Ovary (tissue), 10 donors: ENCODE measurements at regions of chr10 and their contacts with region 1.

Region 1: GRCh38 chr10:47311932-47312662 is 10.2 kb upstream of the GDF2 start:
- DNase-seq: peak; percentile 37 to 76 (median 55)
- H3K4me3 ChIP-seq: no peak overlapping the region
- H3K27ac ChIP-seq: no peak overlapping the region
- H3K4me1 ChIP-seq: no peaks in the 10 kb centered on the region
- H3K27me3 ChIP-seq: no peaks in the 10 kb centered on the region
- CTCF ChIP-seq: peak in 1 of 3 donors; percentile 23
- EP300 ChIP-seq: no peak
- POLR2A ChIP-seq: no peak

Region 2: DNA sequence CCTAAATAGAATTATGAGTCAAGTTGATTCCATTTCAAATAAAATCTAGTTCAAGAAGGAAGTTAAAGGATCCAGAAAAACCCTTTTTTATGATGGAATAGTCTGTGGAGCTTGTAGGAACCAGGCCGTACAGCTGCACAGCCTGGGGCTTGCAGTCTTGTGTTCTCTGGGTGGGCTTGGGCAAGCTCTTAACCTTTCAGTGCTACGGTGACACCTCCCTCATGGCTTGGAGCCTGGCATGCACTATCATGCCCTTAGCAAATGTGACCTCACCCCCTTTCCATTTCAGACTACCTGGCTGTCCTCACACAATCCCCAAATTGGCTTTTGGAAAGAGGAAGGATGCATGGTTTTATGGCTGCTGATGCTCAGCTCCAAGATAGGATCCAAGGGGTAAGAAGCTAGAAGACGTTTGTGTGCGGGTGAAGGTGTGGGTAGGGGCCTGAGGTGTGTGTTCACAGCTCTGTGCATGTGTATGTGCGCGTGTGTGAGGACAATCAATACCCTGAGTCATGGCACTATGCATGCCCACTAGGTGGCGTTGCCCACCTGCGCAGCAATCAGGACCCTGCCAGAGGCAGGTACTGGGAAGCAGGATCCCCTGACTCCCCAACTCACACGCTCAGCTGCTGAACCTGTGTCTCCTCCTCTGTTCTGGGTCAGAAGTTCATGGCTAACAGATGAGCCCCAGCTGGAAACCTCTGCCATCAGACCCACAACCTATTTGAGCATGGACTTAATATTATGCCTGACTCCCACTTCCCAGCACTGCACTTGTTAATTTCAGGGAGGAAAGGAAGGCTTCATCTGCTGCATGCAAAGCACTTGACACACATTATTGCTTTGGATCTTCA is 287.5 kb before region 1 on chr10:
- intact Hi-C with region 1: loop called in 2 of 4 experiments (anchors 5 to 10 kb)
- DNase-seq: peak; percentile 28 to 75 (median 42)
- H3K4me3 ChIP-seq: no peak overlapping the region
- H3K27ac ChIP-seq: no peak overlapping the region
- H3K4me1 ChIP-seq: no peaks in the 10 kb centered on the region
- H3K27me3 ChIP-seq: no peaks in the 10 kb centered on the region
- CTCF ChIP-seq: peak in 1 of 3 donors; percentile 39
- EP300 ChIP-seq: no peak
- POLR2A ChIP-seq: no peak

Region 3: DNA sequence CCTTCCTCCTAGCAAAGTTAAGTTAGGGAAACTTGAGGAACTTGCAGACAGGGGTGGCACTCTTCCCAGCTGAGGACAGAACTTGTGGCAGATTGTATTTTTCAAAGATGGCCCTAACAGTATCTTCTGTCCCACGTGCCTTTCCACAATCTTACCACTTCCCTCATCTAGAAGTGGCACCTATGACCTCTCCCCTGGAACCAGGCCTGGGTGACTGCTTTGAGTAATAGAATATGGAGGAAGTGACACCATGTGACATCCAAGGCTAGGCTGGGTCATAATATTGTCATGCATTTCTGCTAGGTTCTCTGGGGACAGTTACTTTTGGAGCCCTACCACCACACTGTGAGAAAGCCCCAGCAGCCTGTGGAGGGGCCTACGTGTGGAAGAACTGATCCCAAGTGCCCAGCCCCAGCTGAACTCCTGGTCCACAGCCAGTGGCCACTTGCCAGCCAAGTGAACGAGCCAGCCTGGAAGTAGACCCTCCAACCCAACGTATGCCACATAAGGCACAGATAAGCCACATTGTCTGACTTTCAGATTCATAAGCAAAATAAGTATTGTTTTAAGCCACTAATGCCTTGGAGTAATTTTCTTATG is 207.2 kb before region 1 on chr10:
- intact Hi-C with region 1: no loop called
- DNase-seq: no peak
- H3K4me3 ChIP-seq: no peak overlapping the region
- H3K27ac ChIP-seq: no peak overlapping the region
- H3K4me1 ChIP-seq: no peaks in the 10 kb centered on the region
- H3K27me3 ChIP-seq: no peaks in the 10 kb centered on the region
- CTCF ChIP-seq: no peak
- EP300 ChIP-seq: no peak
- POLR2A ChIP-seq: no peak

Region 4: DNA sequence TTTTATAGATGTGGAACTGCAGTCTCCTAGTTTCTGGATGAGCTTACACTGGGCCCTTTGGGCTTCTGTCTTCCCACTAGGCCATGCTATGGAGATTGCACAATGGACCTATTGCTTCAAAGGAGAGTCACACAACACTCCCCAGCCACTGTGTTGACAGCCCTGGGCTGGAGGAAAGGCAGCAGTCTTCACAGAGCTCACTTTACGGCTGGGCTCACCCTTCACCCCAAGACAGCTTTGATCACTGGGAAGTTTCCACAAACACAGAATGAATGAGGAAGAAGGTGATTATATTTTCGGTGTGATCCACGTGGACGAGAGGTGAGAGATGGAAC is 104.8 kb before region 1 on chr10:
- intact Hi-C with region 1: no loop called
- DNase-seq: no peak
- H3K4me3 ChIP-seq: no peak overlapping the region
- H3K27ac ChIP-seq: no peak overlapping the region
- H3K4me1 ChIP-seq: no peaks in the 10 kb centered on the region
- H3K27me3 ChIP-seq: no peaks in the 10 kb centered on the region
- CTCF ChIP-seq: no peak
- EP300 ChIP-seq: no peak
- POLR2A ChIP-seq: no peak

Region 5: GRCh38 chr10:47449102-47449979 is 137.2 kb after region 1 on chr10:
- intact Hi-C with region 1: no loop called
- DNase-seq: peak in 1 of 5 donors; percentile 13
- H3K4me3 ChIP-seq: no peak overlapping the region
- H3K27ac ChIP-seq: no peak overlapping the region
- H3K4me1 ChIP-seq: no peaks in the 10 kb centered on the region
- H3K27me3 ChIP-seq: no peaks in the 10 kb centered on the region
- CTCF ChIP-seq: no peak
- EP300 ChIP-seq: no peak
- POLR2A ChIP-seq: no peak